ENCODE measurements at regions of chr6 and their contacts with region 1.

Region 1: GRCh38 chr6:167501781-167502385 is 177.0 kb downstream of the TTLL2 start:
- DNase-seq: peak; percentile 13
- ATAC-seq: peak; percentile 75
- H3K4me3 ChIP-seq: no peak overlapping the region
- H3K27ac ChIP-seq: no peak overlapping the region
- H3K4me1 ChIP-seq: no peaks in the 10 kb centered on the region
- H3K27me3 ChIP-seq: peaks cover 2% of the 10 kb centered on the region; the same call in 1 of the 2 replicates
- CTCF ChIP-seq: no peak

Region 2: GRCh38 chr6:167153521-167153959 is 348.3 kb before region 1 on chr6:
- CTCF ChIA-PET with region 1: no interaction called
- POLR2A ChIA-PET with region 1: no interaction called
- in situ Hi-C with region 1: no loop called
- intact Hi-C with region 1: no loop called
- DNase-seq: no peak
- ATAC-seq: no peak; the same call in 1 of the 2 replicates
- H3K4me3 ChIP-seq: peak overlapping the region in 1 of 2 experiments; percentile 40; a peak in 2 of 4 replicates
- H3K27ac ChIP-seq: no peak overlapping the region
- H3K4me1 ChIP-seq: peaks cover 6% of the 10 kb centered on the region; the same call in 1 of the 2 replicates
- H3K27me3 ChIP-seq: peaks cover 13% of the 10 kb centered on the region
- CTCF ChIP-seq: no peak

Region 3: GRCh38 chr6:167238146-167238693 is 263.7 kb before region 1 on chr6:
- CTCF ChIA-PET with region 1: no interaction called
- POLR2A ChIA-PET with region 1: no interaction called
- in situ Hi-C with region 1: no loop called
- intact Hi-C with region 1: no loop called
- DNase-seq: no peak
- ATAC-seq: no peak
- H3K4me3 ChIP-seq: no peak overlapping the region
- H3K27ac ChIP-seq: no peak overlapping the region
- H3K4me1 ChIP-seq: no peaks in the 10 kb centered on the region; the same call in 1 of the 2 replicates
- H3K27me3 ChIP-seq: peaks cover 5% of the 10 kb centered on the region
- CTCF ChIP-seq: no peak

Region 4: DNA sequence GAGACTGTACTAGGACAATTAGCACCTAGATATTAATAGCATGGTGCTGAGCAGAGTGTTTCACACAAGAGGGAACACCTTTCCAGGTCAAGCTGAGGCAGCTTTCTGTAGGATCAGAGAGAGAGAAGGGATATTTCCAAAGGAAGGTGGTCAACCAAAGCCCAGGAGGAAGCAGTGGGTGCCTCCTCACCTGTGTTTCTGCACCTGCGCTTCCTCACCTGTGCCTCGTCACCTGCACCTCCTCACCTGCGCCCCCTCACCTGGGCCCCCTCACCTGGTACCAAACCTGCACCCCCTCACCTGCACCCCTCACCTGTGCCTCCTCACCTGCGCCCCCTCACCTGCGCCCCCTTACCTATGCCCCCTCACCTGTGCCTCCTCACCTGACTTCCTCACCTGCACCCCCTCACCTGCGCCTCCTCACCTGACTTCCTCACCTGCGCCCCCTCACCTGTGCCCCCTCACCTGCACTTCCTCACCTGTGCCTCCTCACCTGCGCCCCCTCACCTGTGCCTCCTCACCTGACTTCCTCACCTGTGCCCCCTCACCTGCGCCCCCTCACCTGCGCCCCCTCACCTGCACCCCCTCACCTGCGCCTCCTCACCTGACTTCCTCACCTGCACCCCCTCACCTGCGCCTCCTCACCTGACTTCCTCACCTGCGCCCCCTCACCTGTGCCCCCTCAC is 109.1 kb before region 1 on chr6:
- CTCF ChIA-PET with region 1: interaction called, 11 read pairs
- POLR2A ChIA-PET with region 1: no interaction called
- in situ Hi-C with region 1: no loop called
- intact Hi-C with region 1: no loop called
- DNase-seq: no peak
- ATAC-seq: no peak
- H3K4me3 ChIP-seq: no peak overlapping the region
- H3K27ac ChIP-seq: no peak overlapping the region
- H3K4me1 ChIP-seq: no peaks in the 10 kb centered on the region
- H3K27me3 ChIP-seq: peaks cover 2% of the 10 kb centered on the region; the same call in 1 of the 2 replicates
- CTCF ChIP-seq: no peak

Region 5: DNA sequence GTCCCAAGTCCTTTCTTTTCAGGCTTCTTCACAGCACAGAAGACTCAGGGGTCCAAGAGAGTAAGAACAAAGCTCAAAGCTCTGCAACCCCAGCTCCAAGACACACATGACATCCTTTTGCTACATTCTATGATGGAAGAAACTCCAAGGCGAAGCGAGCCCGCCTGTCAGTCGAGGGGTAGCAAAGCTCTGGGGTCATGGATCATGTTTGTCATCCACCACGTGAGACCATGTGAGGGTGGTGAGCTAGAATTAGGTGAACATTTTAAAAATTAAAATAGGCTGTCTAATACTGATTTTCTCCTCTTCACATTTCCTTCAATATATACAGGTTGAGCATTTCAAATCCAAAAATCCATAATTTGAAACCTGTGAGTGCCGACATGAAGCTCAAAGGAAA is 12.6 kb after region 1 on chr6:
- CTCF ChIA-PET with region 1: interaction called, 15 read pairs
- POLR2A ChIA-PET with region 1: no interaction called
- in situ Hi-C with region 1: no loop called
- intact Hi-C with region 1: no loop called
- DNase-seq: no peak
- ATAC-seq: no peak
- H3K4me3 ChIP-seq: no peak overlapping the region
- H3K27ac ChIP-seq: no peak overlapping the region
- H3K4me1 ChIP-seq: no peaks in the 10 kb centered on the region
- H3K27me3 ChIP-seq: peaks cover 6% of the 10 kb centered on the region
- CTCF ChIP-seq: no peak

Region 6: GRCh38 chr6:167898673-167899311 is 396.9 kb after region 1 on chr6:
- CTCF ChIA-PET with region 1: no interaction called
- POLR2A ChIA-PET with region 1: no interaction called
- in situ Hi-C with region 1: no loop called
- intact Hi-C with region 1: loop called (anchors 10 kb)
- DNase-seq: no peak
- ATAC-seq: peak; percentile 72; the same call in 1 of the 2 replicates
- H3K4me3 ChIP-seq: no peak overlapping the region
- H3K27ac ChIP-seq: no peak overlapping the region
- H3K4me1 ChIP-seq: no peaks in the 10 kb centered on the region
- H3K27me3 ChIP-seq: no peaks in the 10 kb centered on the region
- CTCF ChIP-seq: peak; percentile 75

Measured in Panc1 (cell line).